Dendritic cell treated with granulocyte-macrophage colony-stimulating factor and Interleukin-4, amounts not matched to agents 40 ng/mL and 50 ng/mL, for 4 days (primary cell): ENCODE measurements at regions of chr14 and their contacts with region 1.

Region 1: DNA sequence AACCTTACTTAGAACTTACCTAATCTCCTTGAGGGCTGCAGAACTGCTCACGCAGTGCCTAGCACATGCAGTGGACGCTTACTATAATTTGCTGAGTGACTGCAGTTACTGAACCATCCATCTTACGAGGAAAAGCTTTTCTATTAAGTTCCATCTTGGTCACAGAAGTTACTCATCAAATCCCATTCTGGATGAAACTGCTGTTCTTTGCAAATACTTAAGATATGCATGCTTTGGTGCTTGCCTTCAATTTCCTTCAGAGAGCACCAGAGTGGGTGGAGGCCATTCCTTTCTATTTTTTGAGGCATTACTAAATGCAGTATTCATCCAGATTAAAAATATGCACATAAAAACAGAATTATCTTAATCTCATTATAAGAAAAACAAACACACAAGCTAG is 17.7 kb upstream of the PELI2 start:
- H3K4me3 Mint-ChIP-seq: no peak overlapping the region
- H3K27ac Mint-ChIP-seq: no peak overlapping the region
- H3K4me1 Mint-ChIP-seq: peaks cover 11% of the 10 kb centered on the region
- H3K27me3 Mint-ChIP-seq: no peaks in the 10 kb centered on the region

Region 2: GRCh38 chr14:55846826-55847446 is 253.6 kb before region 1 on chr14:
- intact Hi-C with region 1: loop called (anchors 10 kb)
- H3K4me3 Mint-ChIP-seq: no peak overlapping the region
- H3K27ac Mint-ChIP-seq: no peak overlapping the region
- H3K4me1 Mint-ChIP-seq: no peaks in the 10 kb centered on the region
- H3K27me3 Mint-ChIP-seq: peaks cover 9% of the 10 kb centered on the region

Region 3: DNA sequence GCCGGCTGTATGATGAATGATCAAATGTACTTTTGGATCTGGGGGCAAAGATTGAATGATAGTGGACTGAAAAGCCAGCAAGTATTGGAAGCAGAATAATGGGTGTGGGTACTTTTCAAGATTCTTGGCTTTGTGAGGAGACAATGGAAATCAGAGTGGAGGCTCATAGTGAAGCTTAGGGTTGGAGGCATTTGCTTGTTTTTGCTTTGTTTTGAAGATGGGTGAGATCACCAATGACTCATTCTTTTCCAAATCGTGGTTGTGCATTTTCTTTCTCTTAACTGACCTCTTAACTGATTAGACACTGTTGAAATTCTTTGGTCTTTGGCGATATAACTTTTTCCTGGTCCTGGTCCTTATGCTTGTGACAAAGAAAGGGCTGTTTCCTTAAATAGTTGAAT is 72.0 kb after region 1 on chr14:
- intact Hi-C with region 1: no loop called
- H3K4me3 Mint-ChIP-seq: no peak overlapping the region
- H3K27ac Mint-ChIP-seq: no peak overlapping the region
- H3K4me1 Mint-ChIP-seq: peaks cover 42% of the 10 kb centered on the region
- H3K27me3 Mint-ChIP-seq: no peaks in the 10 kb centered on the region